Cardiac septum (tissue), 1 donor: ENCODE measurements at regions of chr19 and their contacts with region 1.

Region 1: GRCh38 chr19:40465557-40466150 is at the start of gene BLVRB:
- DNase-seq: peak; percentile 100
- total RNA-seq, gene BLVRB: 81.6 TPM

Region 2: DNA sequence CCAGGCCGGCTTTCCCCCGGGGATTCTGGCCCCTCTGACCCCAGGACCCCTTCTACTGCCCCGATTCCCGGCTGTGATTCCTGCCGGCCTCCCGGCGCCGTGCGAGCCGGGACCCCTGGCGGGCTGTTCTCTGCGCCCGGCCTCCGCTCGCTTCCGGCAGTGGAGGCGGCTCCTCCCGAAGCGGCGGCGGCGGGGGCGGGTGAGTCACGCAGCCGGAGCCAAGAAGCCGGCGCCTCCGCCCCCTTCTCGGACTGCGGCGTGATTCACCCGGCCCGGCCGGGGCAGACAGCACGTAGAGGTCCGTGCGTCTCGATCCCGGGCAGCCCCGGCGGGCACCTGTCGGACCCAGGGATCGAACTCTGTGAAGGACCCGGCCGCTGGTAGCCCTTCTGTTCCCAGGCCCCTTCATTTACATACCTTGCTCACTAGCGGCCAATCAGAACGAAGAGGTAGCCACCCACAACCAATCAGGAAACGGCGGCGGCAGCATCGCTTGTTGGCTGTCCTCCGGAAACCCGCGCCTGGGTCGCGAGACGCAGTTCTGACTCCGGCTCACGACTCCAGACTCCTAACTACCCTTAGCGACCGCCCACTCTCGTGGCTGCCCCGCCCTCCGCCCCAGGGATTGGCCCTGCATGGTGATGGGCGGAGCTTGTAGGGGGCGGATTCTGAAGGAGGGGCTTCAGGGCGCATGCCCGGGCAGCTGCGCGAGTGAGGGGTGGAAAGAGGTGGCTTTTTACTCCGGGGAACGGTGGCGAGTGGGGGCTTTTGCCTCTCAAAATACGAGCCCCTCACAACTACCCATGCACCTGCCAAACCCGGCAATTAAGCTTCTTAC is 40.0 kb before region 1 on chr19 and contains the start of gene SERTAD1:
- intact Hi-C with region 1: loop called (anchors 2 kb)
- DNase-seq: peak; percentile 100
- total RNA-seq, gene SERTAD1: 16.7 TPM